OCI-LY7 (cell line): ENCODE measurements at regions of chr5 and their contacts with region 1.

Region 1: GRCh38 chr5:180950291-180950949 is 38.2 kb upstream of the BTNL3 start:
- DNase-seq: no peak
- H3K4me3 ChIP-seq: no peak overlapping the region
- H3K27ac ChIP-seq: no peak overlapping the region
- H3K4me1 ChIP-seq: no peaks in the 10 kb centered on the region
- CTCF ChIP-seq: no peak

Region 2: DNA sequence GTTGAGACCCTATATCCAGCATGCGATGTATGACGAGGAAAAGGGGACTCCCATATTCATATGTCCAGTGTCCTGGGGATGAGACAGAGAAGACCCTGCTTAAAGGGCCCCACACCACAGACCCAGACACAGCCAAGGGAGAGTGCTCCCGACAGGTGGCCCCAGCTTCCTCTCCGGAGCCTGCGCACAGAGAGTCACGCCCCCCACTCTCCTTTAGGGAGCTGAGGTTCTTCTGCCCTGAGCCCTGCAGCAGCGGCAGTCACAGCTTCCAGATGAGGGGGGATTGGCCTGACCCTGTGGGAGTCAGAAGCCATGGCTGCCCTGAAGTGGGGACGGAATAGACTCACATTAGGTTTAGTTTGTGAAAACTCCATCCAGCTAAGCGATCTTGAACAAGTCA is 55.4 kb after region 1 on chr5:
- CTCF ChIA-PET with region 1: no interaction called
- POLR2A ChIA-PET with region 1: interaction called, 4 read pairs
- intact Hi-C with region 1: loop called (anchors 2 kb)
- DNase-seq: no peak
- H3K4me3 ChIP-seq: no peak overlapping the region
- H3K27ac ChIP-seq: no peak overlapping the region
- H3K4me1 ChIP-seq: no peaks in the 10 kb centered on the region
- CTCF ChIP-seq: no peak